Posterior vena cava (tissue), 2 donors: ENCODE measurements at regions of chr9 and their contacts with region 1.

Region 1: GRCh38 chr9:123583646-123584045 is 227.6 kb downstream of the CRB2 start:
- DNase-seq: no peak

Region 2: DNA sequence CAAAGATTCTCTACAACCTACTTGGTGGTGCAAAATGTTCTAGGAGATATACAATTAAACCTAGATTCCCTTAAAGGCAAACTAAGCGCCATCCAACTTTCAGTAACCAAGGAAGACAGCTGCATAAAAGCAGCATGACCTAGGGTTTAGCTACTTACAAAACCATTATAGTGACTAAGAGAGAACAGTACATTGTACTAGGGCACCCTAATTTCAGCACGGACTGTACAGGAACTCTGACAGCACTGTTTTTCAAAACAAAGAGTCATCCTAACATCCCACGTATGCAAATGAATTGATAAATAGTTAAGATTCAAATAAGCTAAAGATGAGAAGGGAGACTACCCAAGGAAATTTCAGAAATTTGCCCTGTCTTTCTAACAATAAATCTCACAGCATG is 345.3 kb before region 1 on chr9:
- intact Hi-C with region 1: no loop called
- DNase-seq: no peak

Region 3: DNA sequence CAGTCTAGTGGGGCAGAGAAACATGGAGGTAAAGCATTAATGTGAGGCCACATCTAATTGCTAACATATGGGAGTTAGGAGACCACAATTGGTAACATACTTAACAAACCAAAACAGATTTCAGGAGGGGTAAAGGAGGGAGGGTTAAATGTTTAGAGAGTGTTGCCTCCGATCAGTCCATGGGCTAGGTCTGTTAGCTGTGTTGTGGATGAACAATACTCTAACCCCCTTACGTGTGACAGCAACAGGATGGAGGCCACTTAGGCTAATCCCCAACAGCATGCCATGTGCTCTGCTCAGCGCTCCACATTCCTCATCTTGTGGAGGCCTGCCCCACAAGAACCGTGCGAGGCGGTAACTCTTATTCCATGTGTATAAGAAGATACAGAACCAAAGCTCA is 60.6 kb before region 1 on chr9:
- intact Hi-C with region 1: no loop called
- DNase-seq: no peak

Region 4: DNA sequence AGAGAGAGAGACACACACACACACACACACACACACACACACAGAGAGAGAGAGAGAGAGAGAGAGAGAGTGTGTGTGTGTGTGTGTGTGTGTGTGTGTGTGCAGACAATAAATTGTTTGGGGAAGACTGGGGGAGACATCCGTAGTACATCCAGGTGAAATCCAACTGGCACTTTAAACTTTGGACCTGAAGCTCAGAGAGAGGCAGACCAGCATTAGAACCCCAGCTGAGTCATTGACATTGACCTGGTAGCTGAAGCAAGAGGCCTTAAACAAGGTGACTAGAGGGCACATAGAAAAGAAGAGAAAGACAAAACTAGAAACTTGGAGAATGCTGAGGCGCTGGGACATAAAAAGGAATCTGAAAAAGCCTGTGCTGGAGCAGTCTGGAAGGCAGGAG is 23.8 kb after region 1 on chr9:
- intact Hi-C with region 1: loop called in 1 of 2 experiments (anchors 1 kb)
- DNase-seq: no peak